CD4-positive, alpha-beta memory T cell (primary cell): ENCODE measurements at regions of chr2 and their contacts with region 1.

Region 1: DNA sequence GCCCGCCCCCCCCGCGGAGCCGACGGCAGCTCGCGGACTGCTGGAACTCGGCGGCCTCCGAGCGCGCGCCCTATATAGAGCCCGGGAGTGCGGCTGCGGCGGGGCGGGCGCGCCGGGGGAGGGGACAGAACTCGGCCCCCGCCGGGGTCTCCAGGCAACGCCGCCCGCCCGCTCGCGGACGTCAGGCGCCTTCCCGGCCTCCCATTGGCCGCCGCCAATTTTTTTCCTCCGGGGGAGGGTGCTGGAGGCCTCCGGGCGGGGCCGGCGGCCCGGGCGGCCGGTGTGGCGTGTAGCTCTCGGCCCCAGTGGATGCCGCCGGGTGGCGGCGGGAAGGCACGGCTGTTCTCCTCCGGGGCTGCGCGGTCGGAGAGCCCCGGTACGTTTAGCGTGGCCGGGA is at the start of gene ZFP36L2:
- DNase-seq: peak; percentile 92 to 99 (median 97)
- H3K4me3 ChIP-seq: peak within 1 kb of the TSS; percentile 76 to 88
- H3K4me3 Mint-ChIP-seq: peak within 1 kb of the TSS; percentile 91 to 99 (median 96)
- H3K27ac ChIP-seq: peak within 1 kb of the TSS; percentile 90
- H3K27ac Mint-ChIP-seq: peak within 1 kb of the TSS; percentile 92 to 98 (median 95)
- H3K4me1 ChIP-seq: peaks cover 26% of the 10 kb centered on the region
- H3K4me1 Mint-ChIP-seq: peaks cover 18 to 46% (median 26%) of the 10 kb centered on the region in 4 donors
- H3K27me3 ChIP-seq: no peaks in the 10 kb centered on the region
- H3K27me3 Mint-ChIP-seq: peaks cover 0 to 2% of the 10 kb centered on the region in 2 donors
- total RNA-seq, gene ZFP36L2: 456 to 464 TPM

Region 2: GRCh38 chr2:42706836-42707235 is 519.7 kb before region 1 on chr2:
- CTCF ChIA-PET with region 1: no interaction called
- POLR2A ChIA-PET with region 1: no interaction called
- intact Hi-C with region 1: no loop called
- DNase-seq: no peak
- H3K4me3 ChIP-seq: no peak overlapping the region
- H3K4me3 Mint-ChIP-seq: no peak overlapping the region
- H3K27ac ChIP-seq: no peak overlapping the region
- H3K27ac Mint-ChIP-seq: no peak overlapping the region
- H3K4me1 ChIP-seq: no peaks in the 10 kb centered on the region
- H3K4me1 Mint-ChIP-seq: no peaks in the 10 kb centered on the region
- H3K27me3 ChIP-seq: no peaks in the 10 kb centered on the region
- H3K27me3 Mint-ChIP-seq: no peaks in the 10 kb centered on the region

Region 3: DNA sequence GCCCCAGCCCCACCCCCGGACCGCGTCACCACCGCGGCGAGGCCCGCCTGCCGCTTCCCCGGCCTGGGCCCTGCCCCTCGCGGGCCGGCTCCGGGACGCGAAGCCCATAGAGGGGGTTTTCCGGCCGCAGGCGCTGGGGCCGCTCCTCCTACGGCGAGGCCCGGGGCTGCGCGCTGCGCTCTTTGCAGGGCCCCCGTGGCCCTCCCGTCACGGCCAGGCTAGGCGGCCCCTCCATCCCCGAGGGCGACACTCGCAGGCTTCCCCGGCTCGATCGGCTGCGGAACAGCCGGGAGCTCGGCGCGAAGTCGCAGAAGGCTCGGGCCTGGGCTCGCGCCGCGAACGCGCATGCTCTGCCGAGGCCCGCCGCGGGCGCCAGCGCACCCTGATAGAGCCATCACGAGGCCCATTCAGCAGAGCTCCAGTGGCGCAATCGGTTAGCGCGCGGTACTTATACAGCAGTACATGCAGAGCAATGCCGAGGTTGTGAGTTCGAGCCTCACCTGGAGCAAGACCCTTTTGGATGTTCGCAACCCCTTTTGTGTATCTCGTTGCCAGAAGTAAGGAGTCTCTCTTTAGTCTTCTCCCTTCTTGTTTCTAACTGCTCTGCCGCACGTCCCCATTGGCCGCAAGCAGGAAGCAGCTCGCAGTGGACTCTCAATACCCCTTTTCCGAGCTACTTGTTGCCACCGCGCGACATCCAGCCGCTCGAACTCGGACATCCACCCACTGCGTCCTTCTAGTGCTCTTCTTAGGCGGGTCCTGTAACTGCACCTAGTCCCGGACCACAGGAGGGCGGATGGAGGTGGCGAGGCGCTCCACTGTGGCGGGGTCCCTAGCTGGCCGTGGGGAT is 416.2 kb before region 1 on chr2:
- CTCF ChIA-PET with region 1: no interaction called
- POLR2A ChIA-PET with region 1: interaction called, 34 read pairs
- intact Hi-C with region 1: loop called (anchors 5 kb)
- DNase-seq: peak; percentile 96 to 97 (median 97)
- H3K4me3 ChIP-seq: peak overlapping the region; percentile 90 to 98
- H3K4me3 Mint-ChIP-seq: peak overlapping the region; percentile 93 to 99 (median 97)
- H3K27ac ChIP-seq: peak overlapping the region; percentile 81
- H3K27ac Mint-ChIP-seq: peak overlapping the region; percentile 95 to 99 (median 99)
- H3K4me1 ChIP-seq: peaks cover 9% of the 10 kb centered on the region
- H3K4me1 Mint-ChIP-seq: peaks cover 9 to 33% (median 17%) of the 10 kb centered on the region in 4 donors
- H3K27me3 ChIP-seq: no peaks in the 10 kb centered on the region
- H3K27me3 Mint-ChIP-seq: peaks cover 0 to 2% of the 10 kb centered on the region in 2 donors

Region 4: DNA sequence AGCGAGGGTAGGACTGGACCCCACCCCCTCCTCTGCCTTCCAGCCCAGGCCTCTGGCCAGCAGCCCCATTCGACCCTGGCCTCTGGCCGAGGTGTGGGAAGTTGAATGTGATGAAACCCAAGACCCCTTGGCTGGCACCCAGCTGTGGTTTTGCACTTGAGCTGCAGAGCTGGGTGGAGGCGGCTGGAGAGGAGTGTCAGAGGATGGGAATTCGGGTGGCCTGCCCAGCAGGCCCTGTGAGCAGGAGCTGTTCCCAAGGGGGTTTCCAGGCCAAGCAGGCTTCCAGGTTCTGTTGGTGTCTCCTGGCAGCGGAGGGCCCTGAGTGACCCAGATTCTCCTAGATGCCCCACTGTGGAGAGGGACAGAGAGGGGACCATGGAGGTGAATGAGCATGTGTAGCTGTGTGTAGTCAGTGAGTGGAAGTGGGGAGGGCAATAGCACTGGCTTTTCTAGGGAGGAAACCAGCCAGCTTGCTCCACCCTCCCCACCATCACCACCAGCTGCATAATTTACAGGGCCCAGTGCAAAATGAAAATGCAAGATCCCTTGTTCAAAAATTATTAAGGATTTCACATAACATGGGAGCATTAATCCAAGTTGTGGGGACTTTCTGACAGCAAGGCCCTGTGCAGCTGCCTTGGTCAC is 262.0 kb before region 1 on chr2:
- CTCF ChIA-PET with region 1: no interaction called
- POLR2A ChIA-PET with region 1: no interaction called
- intact Hi-C with region 1: no loop called
- DNase-seq: no peak
- H3K4me3 ChIP-seq: no peak overlapping the region
- H3K4me3 Mint-ChIP-seq: no peak overlapping the region
- H3K27ac ChIP-seq: no peak overlapping the region
- H3K27ac Mint-ChIP-seq: no peak overlapping the region
- H3K4me1 ChIP-seq: no peaks in the 10 kb centered on the region
- H3K4me1 Mint-ChIP-seq: peaks cover 0 to 4% (median 0%) of the 10 kb centered on the region in 4 donors
- H3K27me3 ChIP-seq: no peaks in the 10 kb centered on the region
- H3K27me3 Mint-ChIP-seq: peaks cover 9 to 13% of the 10 kb centered on the region in 2 donors

Region 5: DNA sequence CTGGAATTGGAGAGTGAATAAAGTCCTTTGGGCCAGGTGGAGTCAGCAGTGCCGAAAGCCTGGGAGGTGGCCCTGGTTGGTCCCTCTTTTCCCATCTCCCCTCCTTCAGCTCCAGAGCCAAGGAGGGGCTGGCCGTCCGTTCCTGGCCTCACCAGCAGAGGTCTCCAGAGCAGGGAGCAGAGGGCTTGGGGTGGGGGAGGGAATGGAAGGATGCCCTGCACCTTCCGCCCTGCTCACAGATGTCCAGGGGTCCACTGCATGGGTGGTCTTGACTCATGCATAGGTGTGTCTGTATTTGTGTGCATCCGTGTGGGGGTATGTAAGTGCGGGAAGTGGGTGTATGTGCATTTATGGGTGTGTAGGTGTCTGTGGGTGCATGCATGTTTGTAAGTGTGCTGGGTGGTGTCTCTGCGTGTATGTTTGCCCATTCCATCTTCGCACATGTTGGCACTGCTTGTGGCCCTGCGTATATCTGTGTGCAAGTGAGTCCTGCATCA is 202.0 kb before region 1 on chr2:
- CTCF ChIA-PET with region 1: interaction called, 7 read pairs
- POLR2A ChIA-PET with region 1: interaction called, 6 read pairs
- intact Hi-C with region 1: loop called (anchors 1 kb)
- DNase-seq: peak in 3 of 5 donors; percentile 7 to 20 (median 17)
- H3K4me3 ChIP-seq: no peak overlapping the region
- H3K4me3 Mint-ChIP-seq: no peak overlapping the region
- H3K27ac ChIP-seq: no peak overlapping the region
- H3K27ac Mint-ChIP-seq: peak overlapping the region in 3 of 7 donors; percentile 29 to 57 (median 53)
- H3K4me1 ChIP-seq: peaks cover 3% of the 10 kb centered on the region
- H3K4me1 Mint-ChIP-seq: peaks cover 4 to 10% (median 7%) of the 10 kb centered on the region in 4 donors
- H3K27me3 ChIP-seq: no peaks in the 10 kb centered on the region
- H3K27me3 Mint-ChIP-seq: no peaks in the 10 kb centered on the region

Region 6: GRCh38 chr2:43131024-43131889 is 95.3 kb before region 1 on chr2:
- CTCF ChIA-PET with region 1: interaction called, 445 read pairs
- POLR2A ChIA-PET with region 1: interaction called, 6,960 read pairs
- intact Hi-C with region 1: loop called (anchors 1 kb)
- DNase-seq: peak; percentile 90 to 96 (median 91)
- H3K4me3 ChIP-seq: peak overlapping the region; percentile 26 to 31
- H3K4me3 Mint-ChIP-seq: peak overlapping the region; percentile 17 to 86 (median 64)
- H3K27ac ChIP-seq: peak overlapping the region; percentile 83
- H3K27ac Mint-ChIP-seq: peak overlapping the region; percentile 97 to 100 (median 100)
- H3K4me1 ChIP-seq: peaks cover 91% of the 10 kb centered on the region
- H3K4me1 Mint-ChIP-seq: peaks cover 67 to 92% (median 81%) of the 10 kb centered on the region in 4 donors
- H3K27me3 ChIP-seq: no peaks in the 10 kb centered on the region
- H3K27me3 Mint-ChIP-seq: no peaks in the 10 kb centered on the region

Region 7: GRCh38 chr2:43194121-43194869 is 32.3 kb before region 1 on chr2:
- CTCF ChIA-PET with region 1: interaction called, 22 read pairs
- POLR2A ChIA-PET with region 1: interaction called, 1,138 read pairs
- intact Hi-C with region 1: no loop called
- DNase-seq: peak in 1 of 5 donors; percentile 33
- H3K4me3 ChIP-seq: peak overlapping the region; percentile 14 to 47
- H3K4me3 Mint-ChIP-seq: peak overlapping the region; percentile 85 to 98 (median 92)
- H3K27ac ChIP-seq: peak overlapping the region; percentile 95
- H3K27ac Mint-ChIP-seq: peak overlapping the region; percentile 95 to 100 (median 99)
- H3K4me1 ChIP-seq: peaks cover 73% of the 10 kb centered on the region
- H3K4me1 Mint-ChIP-seq: peaks cover 35 to 74% (median 53%) of the 10 kb centered on the region in 4 donors
- H3K27me3 ChIP-seq: no peaks in the 10 kb centered on the region
- H3K27me3 Mint-ChIP-seq: no peaks in the 10 kb centered on the region

Region 8: DNA sequence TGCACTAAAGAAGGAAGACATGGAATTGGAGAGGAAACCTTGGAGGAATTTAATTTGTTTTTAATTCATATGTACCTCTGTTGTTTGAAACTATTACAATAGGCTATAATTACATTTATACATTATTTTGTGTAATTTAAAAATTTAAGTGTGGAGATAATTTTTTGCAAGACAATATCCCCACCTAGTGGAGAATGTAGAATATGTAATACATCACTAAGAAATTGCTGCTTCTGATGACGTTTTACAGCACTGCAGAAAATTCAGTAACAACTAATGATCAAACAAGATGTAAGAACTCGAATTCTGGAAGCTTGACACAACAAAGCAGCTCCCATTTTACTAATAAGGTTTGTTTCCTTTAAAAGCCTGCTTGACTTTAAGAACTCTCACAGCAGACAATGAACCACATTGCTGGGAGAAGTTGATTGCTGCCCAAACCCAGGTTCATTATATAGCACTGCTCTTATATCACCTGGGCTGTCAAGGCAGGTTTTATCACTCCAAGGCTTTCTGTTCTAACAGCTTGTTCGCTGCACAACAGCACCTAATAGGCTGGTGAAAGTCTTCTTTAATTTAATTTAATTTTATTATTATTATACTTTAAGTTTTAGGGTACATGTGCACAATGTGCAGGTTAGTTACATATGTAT is 315.9 kb after region 1 on chr2:
- CTCF ChIA-PET with region 1: interaction called, 3 read pairs
- POLR2A ChIA-PET with region 1: interaction called, 3 read pairs
- intact Hi-C with region 1: loop called (anchors 1 kb)
- DNase-seq: peak; percentile 9 to 62 (median 54)
- H3K4me3 ChIP-seq: no peak overlapping the region
- H3K4me3 Mint-ChIP-seq: no peak overlapping the region
- H3K27ac ChIP-seq: no peak overlapping the region
- H3K27ac Mint-ChIP-seq: no peak overlapping the region
- H3K4me1 ChIP-seq: peaks cover 9% of the 10 kb centered on the region
- H3K4me1 Mint-ChIP-seq: peaks cover 5 to 10% (median 9%) of the 10 kb centered on the region in 4 donors
- H3K27me3 ChIP-seq: no peaks in the 10 kb centered on the region
- H3K27me3 Mint-ChIP-seq: no peaks in the 10 kb centered on the region